ENCODE measurements at regions of chr14 and their contacts with region 1.

Region 1: DNA sequence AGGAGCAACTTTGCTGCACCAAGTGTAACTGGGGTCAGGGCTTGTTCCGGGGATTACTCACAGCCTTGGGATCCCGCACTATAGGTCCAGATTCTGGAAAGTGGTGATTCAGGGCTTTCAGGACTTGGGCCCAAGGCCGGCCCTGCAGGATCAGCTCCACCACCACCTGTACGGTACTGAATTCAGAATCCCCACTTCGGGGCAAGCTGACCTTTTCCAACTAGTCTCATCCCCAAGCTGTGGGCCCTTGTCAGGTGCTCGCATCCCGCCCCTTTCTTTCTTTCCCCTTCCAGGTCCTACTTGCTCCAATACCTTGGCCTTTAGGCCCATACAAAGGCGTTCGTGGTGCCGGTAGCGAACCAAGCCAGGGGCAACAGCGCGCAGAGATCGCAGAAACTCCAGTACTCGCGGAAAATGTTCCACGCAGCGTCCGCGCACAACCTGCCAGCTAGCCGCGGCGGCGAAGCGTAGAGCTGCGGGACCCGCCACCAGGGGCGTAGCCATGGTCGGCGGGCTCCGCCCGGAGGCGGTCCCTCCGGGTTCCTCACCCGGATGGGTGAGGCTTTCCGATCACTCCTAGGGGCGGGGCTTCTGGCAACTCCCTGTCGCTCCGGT is 487 bp downstream of the TINF2 start:
- DNase-seq: peak; percentile 91
- ATAC-seq: peak; percentile 81
- H3K4me3 Mint-ChIP-seq: peak overlapping the region; percentile 99
- H3K27ac Mint-ChIP-seq: peak overlapping the region; percentile 100
- H3K4me1 Mint-ChIP-seq: peaks cover 68% of the 10 kb centered on the region
- H3K27me3 Mint-ChIP-seq: no peaks in the 10 kb centered on the region
- CTCF ChIP-seq: no peak

Region 2: DNA sequence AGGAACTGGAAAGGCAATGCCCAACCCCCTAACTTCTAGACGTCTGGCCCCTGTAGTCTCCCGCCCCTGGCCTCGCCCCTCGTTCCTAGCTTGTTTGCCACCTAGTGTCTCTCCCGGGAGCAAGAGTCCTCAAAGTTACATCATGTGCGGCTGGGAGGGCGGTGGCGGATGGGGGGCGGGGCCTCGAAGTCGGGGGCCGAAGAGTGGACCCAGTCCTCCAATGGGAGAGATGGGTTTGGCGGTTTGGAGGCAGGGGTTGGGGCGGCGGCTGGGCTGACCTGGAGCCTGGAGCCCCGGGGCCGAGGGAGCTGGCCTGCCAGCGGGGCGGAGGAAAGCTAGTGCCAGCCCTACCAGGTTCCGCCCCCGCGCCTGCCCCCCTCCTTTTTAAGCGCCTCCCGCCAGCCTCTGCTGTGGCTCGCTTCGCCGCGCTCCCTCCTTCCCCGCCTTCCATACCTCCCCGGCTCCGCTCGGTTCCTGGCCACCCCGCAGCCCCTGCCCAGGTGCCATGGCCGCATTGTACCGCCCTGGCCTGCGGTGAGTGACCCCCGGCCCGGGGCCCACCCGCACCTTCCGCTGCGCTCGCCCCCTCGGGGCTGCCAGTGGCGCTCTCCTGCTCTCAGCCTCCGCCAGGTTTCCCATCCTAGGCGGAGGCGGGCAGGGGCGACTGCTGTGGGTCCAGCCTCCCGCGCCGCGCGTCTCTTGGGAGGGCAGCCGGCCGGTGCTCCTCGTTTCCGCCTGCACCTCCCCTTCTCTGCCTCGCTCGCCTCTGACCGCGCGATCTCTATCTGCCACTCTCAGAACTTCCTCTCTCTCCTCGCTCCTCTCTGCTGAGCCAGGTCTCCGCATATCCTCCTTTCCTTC is 147.8 kb before region 1 on chr14 and contains the start of gene PCK2:
- CTCF ChIA-PET with region 1: no interaction called
- POLR2A ChIA-PET with region 1: interaction called, 28 read pairs
- intact Hi-C with region 1: no loop called
- DNase-seq: peak; percentile 76
- ATAC-seq: peak; percentile 69
- H3K4me3 Mint-ChIP-seq: peak within 1 kb of the TSS; percentile 99
- H3K27ac Mint-ChIP-seq: peak within 1 kb of the TSS; percentile 99
- H3K4me1 Mint-ChIP-seq: peaks cover 31% of the 10 kb centered on the region
- H3K27me3 Mint-ChIP-seq: no peaks in the 10 kb centered on the region
- CTCF ChIP-seq: no peak
- total RNA-seq, gene PCK2: 82.1 and 102 TPM in 2 replicates

Region 3: DNA sequence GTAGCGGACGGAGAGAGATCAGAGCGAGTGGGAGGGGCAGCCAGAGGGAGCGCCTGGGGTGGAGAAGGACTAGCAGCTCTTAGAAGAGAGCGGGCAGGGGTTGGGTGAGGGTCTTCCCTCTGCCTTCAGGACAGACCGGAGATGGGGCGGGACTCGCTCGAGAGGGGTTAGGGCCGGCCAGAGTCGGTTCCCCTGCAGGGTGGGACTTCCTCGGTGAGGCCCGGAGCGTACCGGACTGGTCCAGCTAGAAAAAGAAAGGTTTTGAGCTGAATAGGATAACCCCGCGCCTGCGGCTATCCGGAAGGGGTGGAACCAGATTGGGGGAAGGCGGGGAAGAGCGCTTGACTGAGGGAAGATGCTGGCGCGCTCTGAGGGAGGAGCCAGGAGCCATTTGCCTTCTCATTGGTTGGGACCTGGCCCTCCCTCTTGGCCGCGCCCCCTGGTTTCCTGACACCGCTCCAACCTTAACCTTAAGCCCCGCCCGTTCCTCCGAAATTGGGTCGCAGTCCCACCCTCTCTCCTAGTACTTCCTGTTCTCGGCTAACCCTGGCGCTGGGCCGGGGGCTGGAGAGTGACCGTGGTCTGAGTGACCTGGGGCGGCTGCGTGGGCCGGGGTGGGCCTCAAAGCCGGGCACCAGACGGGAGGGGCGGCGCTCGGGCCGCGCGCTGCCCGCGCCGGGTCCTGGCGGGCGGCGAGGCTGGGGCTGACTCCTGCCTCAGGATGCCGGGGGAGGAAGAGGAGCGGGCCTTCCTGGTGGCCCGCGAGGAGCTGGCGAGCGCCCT is 94.8 kb before region 1 on chr14 and contains the start of gene RNF31:
- CTCF ChIA-PET with region 1: no interaction called
- POLR2A ChIA-PET with region 1: interaction called, 21 read pairs
- intact Hi-C with region 1: loop called (anchors 1 kb)
- DNase-seq: peak; percentile 91
- ATAC-seq: peak; percentile 85
- H3K4me3 Mint-ChIP-seq: peak within 1 kb of the TSS; percentile 97
- H3K27ac Mint-ChIP-seq: peak within 1 kb of the TSS; percentile 94
- H3K4me1 Mint-ChIP-seq: peaks cover 51% of the 10 kb centered on the region
- H3K27me3 Mint-ChIP-seq: no peaks in the 10 kb centered on the region
- CTCF ChIP-seq: no peak
- total RNA-seq, gene RNF31: 87.4 and 99.8 TPM in 2 replicates

Region 4: GRCh38 chr14:24215495-24216344 is 26.2 kb before region 1 on chr14 and contains the start of gene MDP1:
- CTCF ChIA-PET with region 1: interaction called, 20 read pairs
- POLR2A ChIA-PET with region 1: interaction called, 128 read pairs
- intact Hi-C with region 1: loop called (anchors 1 kb)
- DNase-seq: peak; percentile 71
- ATAC-seq: peak; percentile 75
- H3K4me3 Mint-ChIP-seq: peak within 1 kb of the TSS; percentile 93
- H3K27ac Mint-ChIP-seq: peak within 1 kb of the TSS; percentile 95
- H3K4me1 Mint-ChIP-seq: peaks cover 50% of the 10 kb centered on the region
- H3K27me3 Mint-ChIP-seq: no peaks in the 10 kb centered on the region
- CTCF ChIP-seq: no peak
- total RNA-seq, gene MDP1: 12.7 and 16.3 TPM in 2 replicates

Region 5: GRCh38 chr14:24299255-24300195 is 57.6 kb after region 1 on chr14 and contains the starts of genes DHRS1 and NOP9:
- CTCF ChIA-PET with region 1: interaction called, 139 read pairs
- POLR2A ChIA-PET with region 1: interaction called, 242 read pairs
- intact Hi-C with region 1: loop called (anchors 1 kb)
- DNase-seq: peak; percentile 93
- ATAC-seq: peak; percentile 78
- H3K4me3 Mint-ChIP-seq: peak within 1 kb of the TSS; percentile 95
- H3K27ac Mint-ChIP-seq: peak within 1 kb of the TSS; percentile 94
- H3K4me1 Mint-ChIP-seq: peaks cover 51% of the 10 kb centered on the region
- H3K27me3 Mint-ChIP-seq: no peaks in the 10 kb centered on the region
- CTCF ChIP-seq: no peak
- total RNA-seq, gene DHRS1: 32.5 and 33.9 TPM in 2 replicates
- total RNA-seq, gene NOP9: 30.5 and 36.4 TPM in 2 replicates

Region 6: GRCh38 chr14:24442273-24443052 is 200.5 kb after region 1 on chr14 and contains the start of gene SDR39U1:
- CTCF ChIA-PET with region 1: interaction called, 3 read pairs
- POLR2A ChIA-PET with region 1: interaction called, 7 read pairs
- intact Hi-C with region 1: loop called (anchors 1 kb)
- DNase-seq: peak; percentile 81
- ATAC-seq: peak; percentile 89
- H3K4me3 Mint-ChIP-seq: peak within 1 kb of the TSS; percentile 98
- H3K27ac Mint-ChIP-seq: peak within 1 kb of the TSS; percentile 98
- H3K4me1 Mint-ChIP-seq: peaks cover 48% of the 10 kb centered on the region
- H3K27me3 Mint-ChIP-seq: no peaks in the 10 kb centered on the region
- CTCF ChIP-seq: no peak
- total RNA-seq, gene SDR39U1: 70.6 and 80.0 TPM in 2 replicates

Region 7: DNA sequence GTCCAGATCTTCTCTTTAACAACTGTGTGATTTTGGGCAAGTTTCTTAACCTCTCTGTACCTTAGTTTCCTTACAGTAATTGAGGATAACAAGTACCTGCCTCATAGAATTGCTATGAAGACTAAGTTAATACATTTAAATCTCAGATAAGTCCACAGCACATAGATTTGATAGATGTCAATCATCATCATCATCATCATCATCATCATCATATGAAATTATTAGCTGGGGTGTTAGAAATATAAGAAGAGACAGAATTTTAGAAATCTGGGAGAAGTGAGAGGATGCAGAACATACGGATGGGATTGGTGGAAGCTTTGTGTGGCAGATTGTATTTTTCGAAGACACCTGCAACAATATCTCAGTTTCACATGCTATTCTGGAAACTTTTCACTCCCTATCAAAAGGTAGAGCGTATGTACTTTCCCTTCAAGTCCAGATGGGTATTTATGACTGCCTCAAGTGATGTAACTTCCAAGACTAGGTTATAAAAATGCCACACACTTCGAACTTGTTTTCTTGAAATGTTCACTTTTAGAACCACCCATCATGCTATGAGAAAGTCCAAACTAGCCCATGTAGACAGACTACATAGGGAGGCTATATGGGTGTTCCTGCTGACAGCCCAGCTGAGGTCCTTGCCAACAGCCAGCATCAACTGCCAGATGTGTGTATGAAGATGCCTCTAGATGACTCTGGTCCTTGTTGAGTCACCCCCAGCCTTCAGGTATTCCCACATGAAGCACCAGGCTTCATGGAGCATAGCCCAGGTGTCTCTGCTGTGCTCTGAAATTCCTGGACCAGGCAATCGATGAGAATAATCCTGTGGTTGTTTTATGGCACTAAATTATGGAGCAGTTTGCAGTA is 221.3 kb after region 1 on chr14:
- CTCF ChIA-PET with region 1: no interaction called
- POLR2A ChIA-PET with region 1: no interaction called
- intact Hi-C with region 1: no loop called
- DNase-seq: no peak
- ATAC-seq: no peak
- H3K4me3 Mint-ChIP-seq: no peak overlapping the region
- H3K27ac Mint-ChIP-seq: no peak overlapping the region
- H3K4me1 Mint-ChIP-seq: peaks cover 8% of the 10 kb centered on the region
- H3K27me3 Mint-ChIP-seq: no peaks in the 10 kb centered on the region
- CTCF ChIP-seq: no peak

Region 8: DNA sequence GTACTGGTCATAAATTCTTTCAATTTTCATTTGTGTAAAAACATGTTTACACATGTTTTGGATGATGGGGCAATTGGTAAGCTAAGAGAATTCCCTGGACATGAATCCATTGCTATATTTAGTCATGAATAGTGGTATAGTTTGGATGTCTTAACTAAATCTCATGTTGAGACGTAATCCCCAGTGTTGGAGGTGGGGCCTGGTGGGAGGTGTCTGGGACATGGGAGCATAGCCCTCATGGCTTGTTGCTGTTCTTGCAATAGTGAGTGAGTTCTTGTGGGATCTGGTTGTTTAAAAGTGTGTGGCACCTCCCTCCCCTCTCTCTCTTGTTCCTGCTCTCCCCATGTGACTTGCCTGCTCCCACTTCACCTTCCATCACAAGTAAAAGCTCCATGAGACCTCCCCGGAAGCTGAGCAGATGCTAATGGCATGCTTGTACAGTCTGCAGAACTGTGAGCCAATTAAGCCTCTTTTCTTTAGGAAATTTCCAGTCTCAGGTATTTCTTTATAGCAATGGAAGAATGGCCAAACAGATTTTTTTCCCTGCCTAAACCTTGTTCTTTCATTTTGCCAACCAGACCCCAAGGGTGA is 300.5 kb after region 1 on chr14:
- CTCF ChIA-PET with region 1: no interaction called
- POLR2A ChIA-PET with region 1: no interaction called
- intact Hi-C with region 1: no loop called
- DNase-seq: no peak
- ATAC-seq: no peak
- H3K4me3 Mint-ChIP-seq: no peak overlapping the region
- H3K27ac Mint-ChIP-seq: no peak overlapping the region
- H3K4me1 Mint-ChIP-seq: no peaks in the 10 kb centered on the region
- H3K27me3 Mint-ChIP-seq: peaks cover 20% of the 10 kb centered on the region
- CTCF ChIP-seq: no peak

Region 9: DNA sequence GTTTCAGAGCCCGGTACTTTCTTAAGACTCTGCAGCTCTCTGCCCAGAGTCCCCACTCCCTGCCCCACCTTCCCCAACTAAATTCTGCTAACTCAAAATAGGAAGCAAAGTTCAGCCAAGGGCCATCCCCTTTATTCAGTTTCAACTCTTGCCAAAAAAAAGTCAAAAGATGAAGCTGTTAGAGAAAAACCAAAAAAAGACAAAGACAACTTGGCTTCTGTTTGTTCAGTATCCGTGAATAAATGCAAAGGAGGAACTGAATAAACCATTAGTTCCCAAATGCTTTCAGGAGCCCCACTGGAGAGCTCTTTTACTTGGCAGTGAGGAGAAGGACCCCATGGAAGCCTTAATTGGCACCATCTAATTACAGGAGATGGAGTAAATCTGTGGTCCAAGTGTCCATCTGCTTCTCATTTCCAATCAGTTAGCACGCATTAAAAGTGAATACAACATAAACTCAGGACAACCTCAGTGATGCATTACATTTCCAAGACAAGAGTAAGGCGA is 547.5 kb after region 1 on chr14:
- CTCF ChIA-PET with region 1: no interaction called
- POLR2A ChIA-PET with region 1: no interaction called
- intact Hi-C with region 1: no loop called
- DNase-seq: no peak
- ATAC-seq: no peak
- H3K4me3 Mint-ChIP-seq: no peak overlapping the region
- H3K27ac Mint-ChIP-seq: no peak overlapping the region
- H3K4me1 Mint-ChIP-seq: no peaks in the 10 kb centered on the region
- H3K27me3 Mint-ChIP-seq: peaks cover 18% of the 10 kb centered on the region
- CTCF ChIP-seq: no peak

Measured in activated B cell treated with CpG ODN at 0.5 μM for 24 hours (primary cell).